ENCODE measurements at regions of chr1 and their contacts with region 1.

Region 1: GRCh38 chr1:239587066-239587465 is 200.7 kb downstream of the CHRM3 start:
- DNase-seq: peak; percentile 83
- ATAC-seq: peak; percentile 99
- H3K4me3 Mint-ChIP-seq: no peak overlapping the region
- H3K27ac Mint-ChIP-seq: peak overlapping the region; percentile 60
- H3K4me1 Mint-ChIP-seq: peaks cover 22% of the 10 kb centered on the region
- H3K27me3 Mint-ChIP-seq: no peaks in the 10 kb centered on the region

Region 2: GRCh38 chr1:239719642-239720258 is 132.7 kb after region 1 on chr1:
- CTCF ChIA-PET with region 1: interaction called, 13 read pairs
- DNase-seq: peak; percentile 89
- ATAC-seq: peak; percentile 75
- H3K4me3 Mint-ChIP-seq: peak overlapping the region; percentile 85
- H3K27ac Mint-ChIP-seq: peak overlapping the region; percentile 99
- H3K4me1 Mint-ChIP-seq: peaks cover 23% of the 10 kb centered on the region
- H3K27me3 Mint-ChIP-seq: no peaks in the 10 kb centered on the region

Region 3: DNA sequence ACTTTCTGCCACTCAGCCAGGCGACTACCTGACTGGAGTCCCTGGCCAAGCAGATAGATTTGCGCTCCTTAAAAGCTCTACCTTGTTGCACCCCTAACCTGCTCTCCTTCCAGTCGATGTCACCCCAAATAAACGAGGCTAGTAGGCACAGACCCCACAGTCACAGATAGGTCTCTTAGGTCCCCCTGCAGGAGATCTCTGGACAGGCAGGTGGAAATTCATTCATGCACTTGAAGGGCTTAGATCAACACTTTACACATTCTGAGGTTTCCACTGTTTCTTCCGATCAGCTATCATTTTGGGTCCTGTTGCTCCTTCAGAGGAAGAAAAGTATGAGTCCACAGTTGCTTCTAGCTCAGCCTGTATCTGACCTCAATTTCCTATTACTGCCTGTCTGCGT is 232.0 kb after region 1 on chr1:
- CTCF ChIA-PET with region 1: interaction called, 10 read pairs
- DNase-seq: peak; percentile 45
- ATAC-seq: no peak
- H3K4me3 Mint-ChIP-seq: no peak overlapping the region
- H3K27ac Mint-ChIP-seq: no peak overlapping the region
- H3K4me1 Mint-ChIP-seq: peaks cover 28% of the 10 kb centered on the region
- H3K27me3 Mint-ChIP-seq: no peaks in the 10 kb centered on the region

Region 4: GRCh38 chr1:239898062-239898730 is 311.1 kb after region 1 on chr1:
- CTCF ChIA-PET with region 1: interaction called, 27 read pairs
- DNase-seq: peak; percentile 83
- ATAC-seq: peak; percentile 90
- H3K4me3 Mint-ChIP-seq: no peak overlapping the region
- H3K27ac Mint-ChIP-seq: no peak overlapping the region
- H3K4me1 Mint-ChIP-seq: peaks cover 13% of the 10 kb centered on the region
- H3K27me3 Mint-ChIP-seq: peaks cover 25% of the 10 kb centered on the region